GM13977 (cell line): ENCODE measurements at regions of chr5 and their contacts with region 1.

Region 1: DNA sequence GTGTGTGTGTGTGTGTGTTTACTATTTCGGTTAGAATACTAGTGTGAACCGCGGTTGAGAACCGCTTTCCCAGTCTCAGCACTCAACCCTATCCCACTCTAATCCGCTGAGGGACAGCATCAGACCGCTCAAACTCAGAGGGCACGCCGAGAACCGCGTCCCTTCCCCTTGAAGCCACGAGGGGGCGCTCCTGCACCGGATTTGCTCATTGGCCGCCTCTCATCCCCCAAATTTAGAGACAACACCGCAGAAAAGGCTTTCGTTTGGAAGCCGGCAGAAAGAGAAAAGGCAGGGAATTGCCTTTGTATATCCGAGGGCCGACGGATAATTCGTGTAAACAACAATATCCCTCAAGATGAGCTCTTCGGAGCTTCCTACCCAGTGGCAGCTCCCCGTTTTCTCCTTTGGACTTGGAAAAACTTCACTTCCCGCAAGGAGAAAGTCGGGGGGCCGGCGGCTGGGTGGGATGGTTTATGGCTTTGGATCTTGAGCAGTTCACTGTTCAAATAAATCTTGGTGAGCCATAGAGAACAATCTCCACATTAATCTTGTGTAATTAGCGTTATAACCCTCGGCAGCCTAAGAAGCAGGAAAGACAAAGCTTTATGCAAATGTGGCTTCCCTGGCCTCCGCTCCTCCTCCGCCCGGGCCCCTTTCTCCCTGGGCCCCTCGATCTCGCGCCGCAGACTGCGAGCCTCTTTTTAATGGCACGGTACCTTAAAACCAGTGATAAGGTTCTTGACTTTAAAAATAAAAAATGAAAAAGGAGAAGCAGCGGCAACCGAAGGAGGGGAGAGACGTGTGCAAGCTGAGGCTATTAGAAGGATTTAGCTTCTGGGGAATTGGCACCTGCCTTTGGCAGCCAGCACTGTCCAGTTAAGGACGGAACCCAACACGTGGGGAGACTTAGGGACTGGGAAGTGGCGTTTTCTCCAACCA is 296.8 kb downstream of the PARP8 start:
- DNase-seq: peak; percentile 90
- CTCF ChIP-seq: peak; percentile 98

Region 2: GRCh38 chr5:50663636-50664035 is 299.6 kb before region 1 on chr5:
- in situ Hi-C with region 1: no loop called
- DNase-seq: no peak
- CTCF ChIP-seq: no peak

Region 3: DNA sequence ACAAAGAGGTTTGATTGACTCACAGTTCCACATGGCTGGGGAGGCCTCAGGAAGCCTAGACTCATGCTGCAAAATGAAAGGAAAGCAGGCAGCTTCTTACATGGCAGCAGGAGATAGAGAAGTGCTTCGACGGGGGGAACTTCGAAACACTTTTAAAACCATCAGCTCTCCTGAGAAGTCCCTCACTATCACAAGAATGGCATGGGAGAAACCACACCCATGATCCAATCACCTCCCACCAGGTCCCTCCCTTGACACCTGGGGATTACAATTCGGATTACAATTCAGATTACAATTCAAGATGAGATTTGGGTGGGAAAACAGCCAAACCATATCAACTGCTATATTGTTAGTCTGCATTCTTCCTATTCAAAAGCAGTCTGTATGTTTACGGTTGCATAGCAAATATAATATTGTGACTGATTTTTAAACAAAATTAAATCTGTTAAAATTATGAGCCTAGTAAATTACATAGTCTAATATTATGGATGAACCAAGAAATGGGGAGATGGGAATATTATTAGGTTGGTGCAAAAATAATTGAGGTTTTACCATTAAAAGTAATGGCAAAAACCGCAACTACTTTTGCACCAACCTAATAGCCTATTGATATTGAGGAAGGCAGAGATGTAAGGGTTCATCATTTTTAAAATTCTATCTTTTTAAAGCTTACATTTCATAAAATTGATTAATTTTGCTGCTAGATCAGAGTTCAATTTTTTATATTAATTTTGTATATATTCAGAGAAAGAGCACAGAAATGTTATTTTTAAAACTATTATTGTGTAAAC is 97.9 kb after region 1 on chr5:
- in situ Hi-C with region 1: no loop called
- DNase-seq: no peak
- CTCF ChIP-seq: no peak

Region 4: DNA sequence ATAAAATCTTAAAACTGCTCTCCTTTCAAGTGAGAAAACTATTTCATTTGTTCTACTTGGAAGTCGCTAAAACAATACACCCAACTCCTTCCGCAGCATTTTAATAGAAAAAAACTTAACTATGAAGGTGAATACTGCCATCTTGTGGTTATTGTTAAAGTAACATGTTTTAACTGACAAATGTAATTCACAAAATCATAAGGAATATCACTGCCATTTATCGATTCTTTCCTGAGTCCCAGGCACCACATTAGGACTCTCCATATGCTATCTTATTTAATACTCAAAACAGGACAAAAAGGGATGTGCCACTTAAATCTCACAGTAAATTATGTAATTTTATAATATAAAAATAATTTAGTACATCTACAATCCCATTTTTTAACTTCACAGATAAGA is 1694.0 kb after region 1 on chr5:
- in situ Hi-C with region 1: loop called (anchors 25 kb)
- DNase-seq: peak; percentile 30
- CTCF ChIP-seq: peak; percentile 44